Heart right ventricle (tissue), 16 donors: ENCODE measurements at regions of chr20 and their contacts with region 1.

Region 1: GRCh38 chr20:8545212-8545611 is 413.1 kb downstream of the PLCB1 start:
- DNase-seq: no peak
- ATAC-seq: peak in 1 of 8 donors; percentile 53
- H3K4me3 ChIP-seq: no peak overlapping the region
- H3K27ac ChIP-seq: no peak overlapping the region
- H3K4me1 ChIP-seq: peaks cover 3 to 59% (median 36%) of the 10 kb centered on the region in 9 donors
- H3K27me3 ChIP-seq: no peaks in the 10 kb centered on the region
- CTCF ChIP-seq: no peak

Region 2: DNA sequence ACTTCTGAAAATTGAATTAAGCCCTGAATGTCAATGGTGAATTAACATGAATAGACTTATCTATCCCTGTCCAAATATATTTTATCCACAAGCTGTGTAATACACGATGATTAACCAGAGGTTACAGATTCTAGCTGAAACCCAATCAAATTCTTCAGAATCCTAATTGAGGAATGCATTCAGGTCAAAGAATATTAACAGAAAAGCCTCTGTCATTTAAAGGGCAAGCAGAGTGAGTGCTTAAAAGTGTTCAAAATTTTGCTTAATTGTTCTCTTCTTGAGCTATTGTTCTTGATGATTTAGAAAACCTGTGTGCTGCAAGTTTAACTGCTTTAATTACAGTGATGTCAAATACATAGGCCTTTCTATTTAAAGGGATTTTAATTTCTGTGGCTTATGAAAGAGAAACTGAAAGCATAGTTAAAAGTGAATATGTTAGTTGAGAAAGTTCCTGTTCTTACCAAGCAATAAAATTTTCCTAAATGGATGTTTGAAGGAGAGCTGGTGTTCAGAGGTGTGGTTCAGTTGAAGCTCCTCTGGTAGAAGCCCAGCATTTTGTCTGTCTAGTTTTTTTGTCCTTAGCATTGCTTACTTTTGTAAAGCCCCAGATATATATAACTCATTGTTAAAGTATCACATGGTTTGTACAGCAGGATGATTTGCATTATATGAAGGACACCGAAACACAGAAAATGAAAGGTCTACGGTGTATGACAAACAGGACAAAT is 57.3 kb after region 1 on chr20:
- intact Hi-C with region 1: loop called in 1 of 10 experiments (anchors 10 kb)
- DNase-seq: no peak
- ATAC-seq: peak in 5 of 8 donors; percentile 14 to 71 (median 34)
- H3K4me3 ChIP-seq: peak overlapping the region in 6 of 10 donors; percentile 6 to 40 (median 26)
- H3K27ac ChIP-seq: peak overlapping the region in 9 of 10 donors; percentile 20 to 80 (median 49)
- H3K4me1 ChIP-seq: peaks cover 0 to 21% (median 15%) of the 10 kb centered on the region in 9 donors
- H3K27me3 ChIP-seq: no peaks in the 10 kb centered on the region
- CTCF ChIP-seq: no peak

Region 3: DNA sequence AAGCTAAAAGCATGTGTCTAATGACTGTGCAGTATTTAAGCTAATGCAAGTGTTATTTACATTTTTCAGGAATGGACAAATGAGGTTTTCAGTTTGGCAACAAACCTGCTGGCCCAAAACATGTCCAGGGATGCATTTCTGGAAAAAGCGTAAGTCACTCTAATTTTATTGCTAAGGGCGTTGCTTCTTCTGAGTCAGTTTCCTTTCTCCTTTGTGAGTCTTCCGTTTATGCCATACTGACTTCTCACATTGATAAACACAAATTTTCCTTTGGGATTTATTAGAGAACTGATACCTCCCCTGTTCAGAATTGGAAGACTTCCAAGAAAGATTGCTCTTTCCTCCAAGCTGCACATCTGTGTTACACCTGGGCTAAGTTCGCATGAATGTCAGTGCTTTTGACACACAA is 100.8 kb after region 1 on chr20:
- intact Hi-C with region 1: loop called in 3 of 10 experiments (anchors 5 to 10 kb)
- DNase-seq: peak in 1 of 2 donors; percentile 15
- ATAC-seq: peak in 7 of 8 donors; percentile 20 to 74 (median 60)
- H3K4me3 ChIP-seq: no peak overlapping the region
- H3K27ac ChIP-seq: peak overlapping the region in 8 of 10 donors; percentile 1 to 76 (median 64)
- H3K4me1 ChIP-seq: peaks cover 0 to 40% (median 29%) of the 10 kb centered on the region in 9 donors
- H3K27me3 ChIP-seq: no peaks in the 10 kb centered on the region
- CTCF ChIP-seq: no peak

Region 4: DNA sequence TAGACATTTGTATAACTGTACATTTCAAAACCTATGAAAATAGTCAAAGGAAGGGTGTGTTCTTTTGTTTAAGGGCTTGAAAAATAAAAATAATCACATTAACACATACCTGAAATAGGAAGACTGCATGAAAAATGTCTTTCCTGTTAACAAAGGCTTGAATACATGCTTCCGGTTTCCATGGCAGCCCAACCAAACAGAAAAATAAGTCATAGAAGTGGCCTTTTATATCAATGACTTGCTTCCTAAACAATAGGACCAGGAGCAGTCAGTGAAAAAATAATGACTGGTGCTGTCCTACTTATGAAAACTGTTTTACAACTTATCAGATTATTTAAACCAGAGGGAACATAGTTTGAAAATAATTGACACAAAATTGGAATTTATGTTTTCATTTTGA is 111.1 kb after region 1 on chr20:
- intact Hi-C with region 1: loop called in 3 of 10 experiments (anchors 2 to 10 kb)
- DNase-seq: peak in 1 of 2 donors; percentile 73
- ATAC-seq: peak in 7 of 8 donors; percentile 38 to 87 (median 54)
- H3K4me3 ChIP-seq: no peak overlapping the region
- H3K27ac ChIP-seq: peak overlapping the region in 7 of 10 donors; percentile 28 to 76 (median 54)
- H3K4me1 ChIP-seq: peaks cover 0 to 50% (median 13%) of the 10 kb centered on the region in 9 donors
- H3K27me3 ChIP-seq: no peaks in the 10 kb centered on the region
- CTCF ChIP-seq: no peak